BJ (cell line): ENCODE measurements at regions of chr9 and their contacts with region 1.

Region 1: GRCh38 chr9:32550562-32551433 is 1.3 kb upstream of the SMIM27 start:
- DNase-seq: peak; percentile 54
- H3K4me3 ChIP-seq: peak overlapping the region; percentile 75
- H3K27me3 ChIP-seq: no peaks in the 10 kb centered on the region
- CTCF ChIP-seq: peak; percentile 25; the same call in 1 of the 2 replicates

Region 2: GRCh38 chr9:32360983-32361673 is 189.7 kb before region 1 on chr9:
- CTCF ChIA-PET with region 1: no interaction called
- POLR2A ChIA-PET with region 1: interaction called, 24 read pairs
- DNase-seq: no peak
- H3K4me3 ChIP-seq: no peak overlapping the region
- H3K27me3 ChIP-seq: no peaks in the 10 kb centered on the region
- CTCF ChIP-seq: no peak

Region 3: DNA sequence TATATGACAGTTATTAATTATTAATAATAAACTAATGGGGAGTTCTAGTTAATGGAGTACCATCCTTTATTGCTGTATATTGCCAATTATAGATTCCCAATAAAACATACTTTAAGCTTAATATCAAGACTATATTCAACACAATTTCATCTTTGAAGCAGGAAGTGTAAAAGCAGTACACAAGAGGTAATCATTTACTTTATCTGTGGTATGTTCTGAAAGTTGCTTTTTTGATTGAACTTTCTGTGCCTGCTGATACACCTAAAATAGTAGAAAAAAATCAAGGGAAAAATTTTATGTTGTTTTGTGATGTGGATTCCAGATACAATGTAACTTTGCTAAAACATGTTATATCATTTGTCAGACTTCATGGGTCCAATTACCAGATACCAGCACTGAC is 108.4 kb before region 1 on chr9:
- CTCF ChIA-PET with region 1: no interaction called
- POLR2A ChIA-PET with region 1: no interaction called
- DNase-seq: no peak
- H3K4me3 ChIP-seq: no peak overlapping the region
- H3K27me3 ChIP-seq: no peaks in the 10 kb centered on the region
- CTCF ChIP-seq: no peak

Region 4: GRCh38 chr9:32571969-32572899 is 21.4 kb after region 1 on chr9:
- CTCF ChIA-PET with region 1: interaction called, 13 read pairs
- POLR2A ChIA-PET with region 1: interaction called, 3 read pairs
- DNase-seq: no peak
- H3K4me3 ChIP-seq: peak overlapping the region; percentile 93
- H3K27me3 ChIP-seq: no peaks in the 10 kb centered on the region
- CTCF ChIP-seq: peak; percentile 75